A549 (cell line): ENCODE measurements at regions of chr17 and their contacts with region 1.

Region 1: DNA sequence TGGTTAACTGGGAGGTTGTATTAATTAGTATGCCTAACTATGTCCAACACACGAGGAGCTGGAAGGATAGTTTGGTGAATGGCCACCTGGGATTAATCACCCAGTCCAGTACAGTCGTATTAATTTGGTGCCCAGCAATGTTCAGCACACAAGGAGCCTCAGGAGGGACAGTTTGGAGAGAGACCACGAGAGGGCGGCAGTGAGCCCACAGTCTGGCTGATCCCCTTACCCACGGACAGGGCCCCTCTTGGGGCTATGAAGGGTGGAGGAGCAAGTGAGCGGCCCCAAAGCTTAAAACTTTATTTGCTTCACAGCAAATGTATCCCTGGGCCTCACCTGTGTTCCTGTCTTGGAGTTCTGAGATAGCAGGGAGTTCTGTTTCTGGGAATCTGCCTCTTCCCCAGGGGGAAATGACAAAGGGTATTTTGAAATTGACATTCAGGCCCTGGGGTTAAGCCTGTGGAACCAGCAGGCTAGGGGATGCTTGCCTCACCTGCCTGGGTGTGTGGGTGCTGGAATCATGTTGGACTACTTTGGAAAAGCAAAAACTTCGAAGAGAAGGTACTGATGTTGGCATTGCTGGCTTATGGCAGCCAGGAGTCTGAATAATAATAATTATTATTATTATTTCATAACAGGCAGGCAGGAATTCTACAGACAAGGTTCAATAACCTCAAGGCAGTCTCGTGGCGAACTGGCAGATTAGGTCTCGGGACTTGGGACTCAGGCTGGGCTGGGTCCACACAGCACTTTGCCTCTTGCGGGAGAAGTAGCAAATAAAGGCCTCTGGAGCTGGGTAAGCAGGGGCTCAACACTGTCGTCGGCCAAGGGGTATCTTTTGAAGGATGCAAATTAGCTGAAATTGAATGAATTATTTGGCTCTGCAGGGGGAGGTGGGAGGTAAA is 227.6 kb upstream of the ASIC2 start:
- DNase-seq: peak; percentile 46 to 61
- ATAC-seq: peak; percentile 57 to 88; a peak in 3 of 6 replicates
- H3K4me3 ChIP-seq: no peak overlapping the region
- H3K27ac ChIP-seq: no peak overlapping the region
- H3K4me1 ChIP-seq: no peaks in the 10 kb centered on the region
- CTCF ChIP-seq: peak; percentile 58
- EP300 ChIP-seq: no peak
- POLR2A ChIP-seq: no peak
- RAD21 ChIP-seq: peak in 1 of 2 experiments; percentile 50; a peak in 3 of 5 replicates

Region 2: DNA sequence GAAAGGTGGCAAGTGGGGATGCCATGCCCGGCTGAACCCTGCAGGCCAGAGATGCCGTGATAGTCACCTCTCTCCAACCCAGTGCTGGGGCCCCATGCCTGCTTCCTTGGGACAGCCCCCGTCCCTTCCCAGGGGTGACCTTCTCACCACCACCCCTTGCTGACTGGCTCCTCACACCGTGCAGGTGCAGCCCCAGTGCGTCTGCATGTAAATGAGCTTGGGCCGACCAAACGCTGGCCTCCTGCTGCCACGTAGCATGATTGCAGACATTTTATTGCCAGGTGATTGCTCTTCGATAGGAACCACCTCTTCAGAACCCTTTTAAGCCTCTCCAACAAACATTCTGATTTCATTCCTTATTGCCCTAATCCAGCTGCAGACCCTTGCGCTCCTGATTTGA is 260.0 kb before region 1 on chr17:
- CTCF ChIA-PET with region 1: no interaction called
- POLR2A ChIA-PET with region 1: no interaction called
- DNase-seq: no peak
- ATAC-seq: no peak
- H3K4me3 ChIP-seq: no peak overlapping the region
- H3K27ac ChIP-seq: no peak overlapping the region
- H3K4me1 ChIP-seq: 0 out of 3 replicates have a peak, but pooled peaks cover 5% of the 10 kb centered on the region
- CTCF ChIP-seq: no peak
- EP300 ChIP-seq: no peak
- POLR2A ChIP-seq: no peak
- RAD21 ChIP-seq: no peak

Region 3: GRCh38 chr17:33475594-33475993 is 45.1 kb before region 1 on chr17:
- CTCF ChIA-PET with region 1: interaction called, 12 read pairs
- POLR2A ChIA-PET with region 1: no interaction called
- DNase-seq: no peak
- ATAC-seq: no peak
- H3K4me3 ChIP-seq: no peak overlapping the region
- H3K27ac ChIP-seq: no peak overlapping the region
- H3K4me1 ChIP-seq: no peaks in the 10 kb centered on the region
- CTCF ChIP-seq: no peak
- EP300 ChIP-seq: no peak
- POLR2A ChIP-seq: no peak
- RAD21 ChIP-seq: no peak

Region 4: DNA sequence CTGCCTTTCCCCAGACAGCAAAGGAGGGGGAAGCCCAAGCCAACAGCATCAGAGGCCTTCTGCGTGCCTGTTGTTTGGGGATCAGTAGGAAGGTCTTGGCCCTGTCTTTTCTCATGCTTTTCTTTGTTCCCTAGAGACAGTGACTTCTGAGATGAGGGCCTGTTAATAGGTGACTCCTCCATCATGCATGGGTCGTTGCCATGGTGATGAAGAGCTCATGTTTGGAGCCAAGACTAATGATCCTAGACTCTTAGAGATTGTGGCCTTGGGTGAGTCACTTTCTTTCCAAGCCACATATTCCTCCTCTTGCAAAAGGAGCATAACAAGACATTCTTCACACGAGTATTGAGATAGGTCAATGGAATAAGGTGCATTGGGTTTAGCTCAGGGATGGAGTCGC is 26.5 kb before region 1 on chr17:
- CTCF ChIA-PET with region 1: interaction called, 13 read pairs
- POLR2A ChIA-PET with region 1: no interaction called
- DNase-seq: no peak
- ATAC-seq: no peak
- H3K4me3 ChIP-seq: no peak overlapping the region
- H3K27ac ChIP-seq: no peak overlapping the region
- H3K4me1 ChIP-seq: no peaks in the 10 kb centered on the region
- CTCF ChIP-seq: no peak
- EP300 ChIP-seq: no peak
- POLR2A ChIP-seq: no peak
- RAD21 ChIP-seq: no peak

Region 5: DNA sequence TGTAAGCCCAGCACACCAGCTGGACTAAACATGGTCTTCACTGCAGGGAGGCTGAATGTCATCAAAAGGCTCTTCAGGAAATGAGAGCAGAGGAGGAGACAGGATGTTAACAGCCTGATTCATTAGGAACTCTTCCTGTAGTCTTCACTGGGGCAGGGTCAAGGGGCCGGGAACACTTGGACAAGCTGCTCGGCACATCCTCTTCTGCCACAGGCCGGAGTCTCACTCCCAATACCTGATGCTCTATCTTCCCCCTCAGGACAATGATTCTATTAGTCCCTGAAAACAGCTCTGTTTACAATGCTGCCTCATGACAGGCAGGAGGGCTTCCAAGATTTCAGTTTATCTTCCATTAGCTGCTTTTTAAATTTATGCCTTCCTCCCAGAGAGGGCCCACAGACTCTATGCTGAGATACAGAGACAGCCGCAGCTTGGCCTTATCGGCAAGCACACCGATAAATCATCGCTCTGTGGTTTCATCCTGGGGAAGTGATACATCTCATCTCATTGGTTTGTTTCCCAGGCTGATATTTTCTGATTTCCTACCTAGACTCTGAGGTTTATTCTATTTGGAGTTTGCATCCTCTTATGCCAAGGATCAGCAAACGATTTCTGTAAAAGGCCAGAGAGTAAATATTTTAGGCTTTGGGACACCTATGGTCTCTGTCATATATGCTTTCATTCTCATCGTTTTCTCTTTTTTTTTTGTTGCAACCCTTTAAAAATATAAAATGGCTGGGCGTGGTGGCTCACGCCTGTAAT is 13.6 kb before region 1 on chr17:
- CTCF ChIA-PET with region 1: interaction called, 13 read pairs
- POLR2A ChIA-PET with region 1: no interaction called
- DNase-seq: no peak
- ATAC-seq: no peak
- H3K4me3 ChIP-seq: no peak overlapping the region
- H3K27ac ChIP-seq: no peak overlapping the region
- H3K4me1 ChIP-seq: no peaks in the 10 kb centered on the region
- CTCF ChIP-seq: no peak
- EP300 ChIP-seq: no peak
- POLR2A ChIP-seq: no peak
- RAD21 ChIP-seq: no peak

Region 6: GRCh38 chr17:33531311-33531710 is 10.6 kb after region 1 on chr17:
- CTCF ChIA-PET with region 1: interaction called, 27 read pairs
- POLR2A ChIA-PET with region 1: no interaction called
- DNase-seq: no peak
- ATAC-seq: no peak
- H3K4me3 ChIP-seq: no peak overlapping the region
- H3K27ac ChIP-seq: no peak overlapping the region
- H3K4me1 ChIP-seq: no peaks in the 10 kb centered on the region
- CTCF ChIP-seq: no peak
- EP300 ChIP-seq: no peak
- POLR2A ChIP-seq: no peak
- RAD21 ChIP-seq: no peak